B cell (primary cell): ENCODE measurements at regions of chr9 and their contacts with region 1.

Region 1: DNA sequence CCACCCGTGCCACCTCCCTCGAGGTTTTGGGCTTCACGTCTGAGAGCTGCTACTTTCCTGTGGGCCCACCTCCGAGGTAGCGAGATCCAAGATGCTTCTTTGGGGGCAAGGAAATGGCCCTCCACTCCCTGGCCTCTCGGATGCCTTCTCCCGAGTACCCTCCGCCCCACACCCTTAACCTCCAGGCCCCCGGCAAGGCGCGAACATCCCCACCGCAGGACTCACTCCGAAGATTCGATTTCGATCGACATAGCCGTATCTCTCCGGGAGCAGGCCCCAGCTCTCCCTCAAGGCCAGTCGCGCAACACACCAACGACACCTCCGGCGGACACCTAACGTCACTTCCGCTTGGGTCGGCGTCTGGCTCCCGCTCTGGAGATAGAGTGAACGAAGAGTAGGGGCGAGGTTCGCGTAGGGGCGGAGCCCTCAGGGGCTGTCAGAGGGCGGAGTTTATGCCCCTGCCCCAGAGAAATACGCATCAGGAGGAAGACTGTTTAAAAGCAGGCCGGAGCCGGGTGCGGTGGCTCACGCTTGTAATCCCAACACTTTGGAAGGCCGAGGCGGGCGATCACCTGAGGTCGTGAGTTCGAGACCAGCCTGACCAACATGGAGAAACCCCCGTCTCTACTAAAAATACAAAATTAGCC is at the start of gene SMU1:
- DNase-seq: peak; percentile 97
- ATAC-seq: peak; percentile 98
- H3K4me3 ChIP-seq: peak within 1 kb of the TSS; percentile 72 to 87 (median 84)
- H3K4me3 Mint-ChIP-seq: peak within 1 kb of the TSS; percentile 97
- H3K27ac ChIP-seq: peak within 1 kb of the TSS; percentile 91 to 95
- H3K27ac Mint-ChIP-seq: peak within 1 kb of the TSS; percentile 98
- H3K4me1 ChIP-seq: peaks cover 17 to 29% of the 10 kb centered on the region in 2 donors
- H3K4me1 Mint-ChIP-seq: peaks cover 34% of the 10 kb centered on the region
- H3K27me3 ChIP-seq: no peaks in the 10 kb centered on the region
- H3K27me3 Mint-ChIP-seq: no peaks in the 10 kb centered on the region
- CTCF ChIP-seq: no peak
- total RNA-seq, gene SMU1: 26.3 and 27.4 TPM in 2 replicates

Region 2: DNA sequence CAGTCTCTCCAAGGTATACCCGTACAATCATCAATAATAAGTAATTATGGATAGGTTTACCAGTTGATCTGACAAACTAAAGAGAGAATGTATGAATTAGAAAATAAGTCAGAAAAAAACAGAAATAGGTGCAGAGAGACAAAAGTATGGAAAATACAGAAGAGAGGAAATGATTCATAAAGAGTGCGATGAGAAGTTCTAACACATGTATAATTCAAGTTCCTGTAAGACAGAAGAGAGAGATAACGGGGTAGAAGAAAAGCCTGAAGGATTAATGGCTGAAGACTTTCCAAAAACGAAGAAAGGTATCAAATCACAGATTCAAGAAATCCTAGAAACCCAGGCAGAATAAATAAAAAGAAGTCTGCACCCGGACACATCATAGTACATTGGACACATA is 16.2 kb after region 1 on chr9:
- CTCF ChIA-PET with region 1: no interaction called
- POLR2A ChIA-PET with region 1: no interaction called
- intact Hi-C with region 1: no loop called
- DNase-seq: no peak
- ATAC-seq: no peak
- H3K4me3 ChIP-seq: no peak overlapping the region
- H3K4me3 Mint-ChIP-seq: no peak overlapping the region
- H3K27ac ChIP-seq: no peak overlapping the region
- H3K27ac Mint-ChIP-seq: no peak overlapping the region
- H3K4me1 ChIP-seq: no peaks in the 10 kb centered on the region
- H3K4me1 Mint-ChIP-seq: no peaks in the 10 kb centered on the region
- H3K27me3 ChIP-seq: no peaks in the 10 kb centered on the region
- H3K27me3 Mint-ChIP-seq: no peaks in the 10 kb centered on the region
- CTCF ChIP-seq: no peak

Region 3: DNA sequence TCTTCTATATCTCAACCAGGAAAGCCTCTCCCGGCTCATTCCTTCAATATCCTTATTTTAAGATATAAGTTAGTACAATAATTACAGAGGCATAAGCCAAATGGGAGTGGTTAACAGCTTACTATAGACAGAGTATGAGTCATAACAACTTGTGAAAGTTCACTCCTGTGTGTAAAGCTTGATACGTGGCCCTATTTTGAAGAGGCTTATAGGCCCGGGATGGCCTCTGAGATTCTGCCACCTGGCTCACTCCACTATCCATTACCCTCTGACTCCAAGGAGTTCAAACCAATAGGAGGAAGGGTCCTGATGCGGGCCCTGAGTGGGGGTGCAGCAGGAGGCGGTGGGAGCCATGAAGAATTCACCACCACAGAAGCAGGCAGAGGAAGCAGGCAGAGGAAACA is 54.0 kb after region 1 on chr9:
- CTCF ChIA-PET with region 1: interaction called, 3 read pairs
- POLR2A ChIA-PET with region 1: no interaction called
- intact Hi-C with region 1: loop called (anchors 2 kb)
- DNase-seq: no peak
- ATAC-seq: peak; percentile 32
- H3K4me3 ChIP-seq: peak overlapping the region in 1 of 5 experiments; percentile 17
- H3K4me3 Mint-ChIP-seq: peak overlapping the region; percentile 58
- H3K27ac ChIP-seq: peak overlapping the region; percentile 71 to 93
- H3K27ac Mint-ChIP-seq: peak overlapping the region; percentile 88
- H3K4me1 ChIP-seq: peaks cover 66 to 81% of the 10 kb centered on the region in 2 donors
- H3K4me1 Mint-ChIP-seq: peaks cover 92% of the 10 kb centered on the region
- H3K27me3 ChIP-seq: no peaks in the 10 kb centered on the region
- H3K27me3 Mint-ChIP-seq: no peaks in the 10 kb centered on the region
- CTCF ChIP-seq: no peak

Region 4: GRCh38 chr9:33202552-33203201 is 126.2 kb after region 1 on chr9:
- CTCF ChIA-PET with region 1: interaction called, 4 read pairs
- POLR2A ChIA-PET with region 1: no interaction called
- intact Hi-C with region 1: loop called (anchors 1 kb)
- DNase-seq: peak; percentile 91
- ATAC-seq: peak; percentile 99
- H3K4me3 ChIP-seq: peak overlapping the region in 1 of 5 experiments; percentile 4
- H3K4me3 Mint-ChIP-seq: peak overlapping the region; percentile 86
- H3K27ac ChIP-seq: peak overlapping the region in 1 of 2 donors; percentile 39
- H3K27ac Mint-ChIP-seq: peak overlapping the region; percentile 87
- H3K4me1 ChIP-seq: peaks cover 14 to 16% of the 10 kb centered on the region in 2 donors
- H3K4me1 Mint-ChIP-seq: peaks cover 20% of the 10 kb centered on the region
- H3K27me3 ChIP-seq: no peaks in the 10 kb centered on the region
- H3K27me3 Mint-ChIP-seq: no peaks in the 10 kb centered on the region
- CTCF ChIP-seq: no peak

Region 5: GRCh38 chr9:33473643-33474352 is 397.3 kb after region 1 on chr9 and contains the start of gene NOL6:
- CTCF ChIA-PET with region 1: no interaction called
- POLR2A ChIA-PET with region 1: no interaction called
- intact Hi-C with region 1: loop called (anchors 5 kb)
- DNase-seq: peak; percentile 99
- ATAC-seq: peak; percentile 99
- H3K4me3 ChIP-seq: peak within 1 kb of the TSS; percentile 80 to 99 (median 95)
- H3K4me3 Mint-ChIP-seq: peak within 1 kb of the TSS; percentile 99
- H3K27ac ChIP-seq: peak within 1 kb of the TSS; percentile 44 to 81
- H3K27ac Mint-ChIP-seq: peak within 1 kb of the TSS; percentile 92
- H3K4me1 ChIP-seq: peaks cover 17 to 22% of the 10 kb centered on the region in 2 donors
- H3K4me1 Mint-ChIP-seq: peaks cover 28% of the 10 kb centered on the region
- H3K27me3 ChIP-seq: no peaks in the 10 kb centered on the region
- H3K27me3 Mint-ChIP-seq: no peaks in the 10 kb centered on the region
- CTCF ChIP-seq: no peak
- total RNA-seq, gene NOL6: 31.8 and 31.9 TPM in 2 replicates